ENCODE measurements at regions of chr6 and their contacts with region 1.

Region 1: DNA sequence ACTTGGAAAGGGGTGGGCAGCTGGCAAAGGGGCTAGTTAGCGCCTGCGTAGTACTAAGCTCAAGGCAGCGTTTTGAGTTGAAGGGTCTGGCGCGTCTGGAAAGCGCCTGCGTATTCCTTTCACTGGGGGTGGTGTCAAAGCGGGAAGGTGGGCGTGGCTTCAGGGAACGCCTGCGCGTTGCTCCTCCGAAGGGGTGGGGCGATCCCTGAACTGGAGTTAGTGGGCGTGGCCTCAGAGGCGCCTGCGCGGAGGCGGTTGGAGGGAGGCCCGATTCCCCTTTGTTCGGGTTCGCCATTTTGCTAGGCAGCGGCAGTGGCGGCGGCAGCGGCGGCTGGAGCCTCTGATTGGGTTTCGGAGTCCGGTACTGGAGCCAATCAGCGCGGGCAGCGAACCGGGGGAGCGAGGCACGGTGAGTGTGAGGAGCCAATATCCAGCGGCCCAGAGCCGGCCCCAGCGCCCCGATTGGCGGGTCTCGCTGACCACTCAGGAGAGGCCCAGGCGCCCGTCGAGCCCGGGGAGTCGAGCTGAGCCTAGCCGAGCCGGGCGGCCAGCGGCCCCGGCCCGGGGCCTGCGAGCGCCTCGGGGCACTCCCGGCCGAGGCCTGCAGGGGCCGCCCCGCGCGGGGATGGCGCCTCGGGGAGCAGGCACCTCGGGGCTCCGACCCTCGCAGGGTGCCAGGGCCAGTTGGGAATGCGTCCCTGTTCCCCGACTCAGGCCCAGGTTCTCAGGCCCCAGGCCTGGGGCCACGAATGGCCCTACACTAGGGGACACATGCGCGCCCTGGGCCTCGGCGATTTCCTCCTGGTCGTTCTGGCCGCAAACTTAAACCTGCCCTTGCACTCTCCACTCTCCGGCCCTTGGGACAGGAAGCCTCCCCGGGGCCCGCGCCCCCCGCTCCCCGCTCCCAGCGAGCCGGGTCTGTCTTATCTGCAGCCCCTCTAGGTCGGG is at the start of gene NFYA:
- DNase-seq: peak; percentile 99
- ATAC-seq: peak; percentile 74
- H3K4me3 Mint-ChIP-seq: peak within 1 kb of the TSS; percentile 91
- H3K27ac Mint-ChIP-seq: peak within 1 kb of the TSS; percentile 98
- H3K4me1 Mint-ChIP-seq: peaks cover 52% of the 10 kb centered on the region
- H3K27me3 Mint-ChIP-seq: no peaks in the 10 kb centered on the region
- CTCF ChIP-seq: peak; percentile 65
- total RNA-seq, gene NFYA: 30.7 to 31.1 TPM

Region 2: DNA sequence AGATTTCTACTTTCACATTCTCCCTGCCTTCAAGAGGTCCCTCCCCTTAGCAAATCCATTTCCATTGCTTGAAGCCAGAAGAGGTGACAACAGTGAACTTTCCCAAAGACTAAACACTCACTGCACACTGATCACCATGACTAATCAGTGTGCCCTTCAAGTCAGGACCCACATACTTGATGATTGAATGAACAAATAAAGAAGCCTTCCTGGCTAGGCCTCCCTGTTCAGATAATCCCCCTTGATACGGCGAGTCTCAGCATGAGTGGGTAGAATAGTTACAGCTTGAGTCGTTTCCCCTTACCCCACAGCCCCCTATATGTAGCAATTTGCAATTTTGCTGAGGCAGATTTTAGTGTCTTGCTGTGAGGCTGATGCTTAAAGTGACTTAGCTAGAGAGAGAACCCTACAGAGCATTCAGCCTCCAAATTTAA is 136.1 kb before region 1 on chr6:
- CTCF ChIA-PET with region 1: no interaction called
- POLR2A ChIA-PET with region 1: no interaction called
- intact Hi-C with region 1: no loop called
- DNase-seq: no peak
- ATAC-seq: no peak
- H3K4me3 Mint-ChIP-seq: no peak overlapping the region
- H3K27ac Mint-ChIP-seq: no peak overlapping the region
- H3K4me1 Mint-ChIP-seq: no peaks in the 10 kb centered on the region
- H3K27me3 Mint-ChIP-seq: peaks cover 8% of the 10 kb centered on the region
- CTCF ChIP-seq: no peak

Region 3: GRCh38 chr6:40999569-40999968 is 73.4 kb before region 1 on chr6:
- CTCF ChIA-PET with region 1: no interaction called
- POLR2A ChIA-PET with region 1: no interaction called
- intact Hi-C with region 1: no loop called
- DNase-seq: peak; percentile 31
- ATAC-seq: peak; percentile 47
- H3K4me3 Mint-ChIP-seq: no peak overlapping the region
- H3K27ac Mint-ChIP-seq: no peak overlapping the region
- H3K4me1 Mint-ChIP-seq: no peaks in the 10 kb centered on the region
- H3K27me3 Mint-ChIP-seq: peaks cover 29% of the 10 kb centered on the region
- CTCF ChIP-seq: no peak

Region 4: DNA sequence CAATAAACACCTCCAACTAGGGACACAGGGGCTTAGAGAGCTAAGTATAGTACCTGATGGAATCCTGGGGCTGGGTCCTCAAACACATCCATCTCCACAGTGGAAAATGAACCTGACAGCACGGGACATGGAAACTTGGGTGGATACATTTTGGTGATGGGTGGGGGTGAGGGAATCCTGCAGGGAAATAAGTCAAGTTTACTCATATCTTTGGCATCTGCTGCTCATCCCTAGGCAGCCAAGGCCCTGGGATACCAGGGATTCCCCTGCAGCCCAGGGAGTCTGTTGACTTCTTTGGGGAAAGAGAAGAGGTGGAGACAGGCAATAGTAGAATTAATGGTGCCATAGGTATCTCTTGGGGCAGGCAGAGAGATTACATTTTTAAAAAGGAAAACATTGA is 13.4 kb before region 1 on chr6:
- CTCF ChIA-PET with region 1: interaction called, 47 read pairs
- POLR2A ChIA-PET with region 1: no interaction called
- intact Hi-C with region 1: no loop called
- DNase-seq: no peak
- ATAC-seq: no peak
- H3K4me3 Mint-ChIP-seq: no peak overlapping the region
- H3K27ac Mint-ChIP-seq: no peak overlapping the region
- H3K4me1 Mint-ChIP-seq: peaks cover 5% of the 10 kb centered on the region
- H3K27me3 Mint-ChIP-seq: no peaks in the 10 kb centered on the region
- CTCF ChIP-seq: no peak

Region 5: DNA sequence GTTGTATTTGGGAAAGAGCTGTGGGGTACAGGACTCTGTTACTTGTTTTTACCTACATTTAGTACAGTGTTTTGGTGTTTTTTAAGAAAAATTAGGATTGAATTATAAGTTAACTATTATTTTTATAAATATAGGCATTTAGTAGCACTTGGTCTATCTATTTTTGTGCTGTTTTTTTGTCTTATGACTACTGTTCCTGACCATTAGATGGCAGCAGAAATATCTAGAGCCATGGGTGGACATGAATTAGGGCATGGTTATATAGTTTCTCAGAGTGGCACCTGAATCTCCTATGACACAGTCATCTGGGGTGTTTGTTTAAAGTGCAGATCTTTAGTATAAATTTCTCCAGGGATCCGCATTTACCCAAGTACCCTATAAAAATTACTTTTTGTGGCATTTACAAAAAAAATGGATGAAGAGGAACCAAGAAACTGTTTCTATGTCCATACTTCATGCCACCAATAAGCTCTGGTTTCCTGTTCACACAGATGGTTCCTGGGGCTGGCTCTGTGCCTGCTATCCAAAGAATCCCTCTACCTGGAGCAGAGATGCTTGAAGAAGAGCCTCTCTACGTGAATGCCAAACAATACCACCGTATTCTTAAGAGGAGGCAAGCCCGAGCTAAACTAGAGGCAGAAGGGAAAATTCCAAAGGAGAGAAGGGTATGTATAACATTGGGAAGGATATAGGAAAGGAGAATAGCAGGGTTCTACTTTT is 19.6 kb after region 1 on chr6:
- CTCF ChIA-PET with region 1: interaction called, 11 read pairs
- POLR2A ChIA-PET with region 1: no interaction called
- intact Hi-C with region 1: no loop called
- DNase-seq: no peak
- ATAC-seq: peak; percentile 47
- H3K4me3 Mint-ChIP-seq: no peak overlapping the region
- H3K27ac Mint-ChIP-seq: no peak overlapping the region
- H3K4me1 Mint-ChIP-seq: no peaks in the 10 kb centered on the region
- H3K27me3 Mint-ChIP-seq: no peaks in the 10 kb centered on the region
- CTCF ChIP-seq: peak; percentile 45

Region 6: GRCh38 chr6:41111036-41111435 is 38.1 kb after region 1 on chr6:
- CTCF ChIA-PET with region 1: no interaction called
- POLR2A ChIA-PET with region 1: no interaction called
- intact Hi-C with region 1: no loop called
- DNase-seq: no peak
- ATAC-seq: no peak
- H3K4me3 Mint-ChIP-seq: no peak overlapping the region
- H3K27ac Mint-ChIP-seq: no peak overlapping the region
- H3K4me1 Mint-ChIP-seq: no peaks in the 10 kb centered on the region
- H3K27me3 Mint-ChIP-seq: no peaks in the 10 kb centered on the region
- CTCF ChIP-seq: no peak